ENCODE measurements at regions of chr12 and their contacts with region 1.

Region 1: DNA sequence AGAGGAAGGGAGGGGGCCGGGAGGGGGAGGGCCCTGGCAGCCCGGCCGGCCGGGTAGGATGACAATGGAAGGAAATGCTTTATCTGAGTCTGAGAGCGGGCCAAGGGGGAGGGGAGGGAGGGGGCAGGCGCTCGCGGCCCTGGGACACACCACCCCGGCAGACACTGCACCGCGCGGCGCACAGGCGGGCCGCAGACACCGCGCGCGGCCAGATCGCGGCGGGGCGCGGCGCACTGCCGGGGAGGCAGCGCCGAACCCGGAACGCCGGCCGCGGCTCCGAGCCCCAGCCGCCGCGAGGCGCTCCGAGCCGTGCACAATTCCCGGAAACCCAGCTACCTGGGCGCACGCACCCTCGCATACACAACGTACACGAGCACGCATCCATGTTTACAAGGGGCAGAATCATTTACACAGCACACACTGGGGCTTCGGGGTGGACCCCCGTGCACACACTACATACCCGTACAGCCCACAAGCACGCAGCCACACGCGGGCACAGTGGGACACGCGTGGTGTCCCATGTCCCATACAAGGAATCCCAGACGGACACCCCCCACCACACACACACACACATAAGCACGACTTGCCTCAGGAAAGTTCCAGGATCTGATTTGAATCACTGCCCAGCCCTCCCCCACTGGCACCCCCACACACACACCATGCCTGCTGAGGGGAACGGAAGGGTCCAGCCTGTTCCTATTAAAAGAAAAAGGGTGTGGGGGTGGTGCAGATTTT is at the start of gene HDAC7:
- DNase-seq: peak; percentile 57
- ATAC-seq: peak; percentile 76
- H3K4me3 Mint-ChIP-seq: peak within 1 kb of the TSS; percentile 89
- H3K27ac Mint-ChIP-seq: peak within 1 kb of the TSS; percentile 93
- H3K4me1 Mint-ChIP-seq: peaks cover 65% of the 10 kb centered on the region
- H3K27me3 Mint-ChIP-seq: no peaks in the 10 kb centered on the region
- CTCF ChIP-seq: no peak
- total RNA-seq, gene HDAC7: 103 and 126 TPM in 2 replicates

Region 2: GRCh38 chr12:47504775-47505446 is 315.2 kb before region 1 on chr12:
- CTCF ChIA-PET with region 1: no interaction called
- POLR2A ChIA-PET with region 1: no interaction called
- intact Hi-C with region 1: no loop called
- DNase-seq: no peak
- ATAC-seq: no peak
- H3K4me3 Mint-ChIP-seq: no peak overlapping the region
- H3K27ac Mint-ChIP-seq: no peak overlapping the region
- H3K4me1 Mint-ChIP-seq: no peaks in the 10 kb centered on the region
- H3K27me3 Mint-ChIP-seq: no peaks in the 10 kb centered on the region
- CTCF ChIP-seq: no peak

Region 3: DNA sequence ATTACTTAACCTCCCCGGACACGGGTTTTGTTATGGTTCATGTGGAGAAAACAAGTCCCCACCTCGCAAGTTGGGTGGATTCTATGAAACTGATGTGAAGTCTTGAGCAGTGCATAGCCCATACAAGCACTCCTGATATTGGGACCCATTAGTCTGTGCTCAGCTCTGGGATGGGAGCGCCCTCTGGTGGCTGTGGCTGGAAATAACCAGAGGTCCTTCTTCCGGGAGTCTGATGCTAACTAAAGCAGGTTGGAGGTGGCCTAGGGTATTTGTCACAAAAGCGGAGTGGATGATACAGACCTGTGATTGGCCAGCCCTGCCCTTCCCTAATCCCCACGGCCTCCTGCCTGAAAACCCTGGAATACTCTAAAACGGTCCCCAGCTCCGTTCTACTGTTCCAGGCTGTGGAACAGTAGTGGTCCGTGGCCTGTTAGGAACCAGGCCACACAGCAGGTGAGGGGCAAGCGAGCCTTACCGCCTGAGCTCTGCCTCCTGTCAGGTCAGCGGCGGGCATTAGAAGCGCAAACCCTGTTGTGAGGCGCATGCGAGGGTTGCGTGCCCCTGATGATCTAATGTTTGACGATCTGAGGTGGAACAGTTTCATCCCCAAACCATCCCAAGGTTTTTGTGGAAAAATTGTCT is 40.6 kb before region 1 on chr12:
- CTCF ChIA-PET with region 1: interaction called, 8 read pairs
- POLR2A ChIA-PET with region 1: interaction called, 3 read pairs
- intact Hi-C with region 1: loop called (anchors 1 kb)
- DNase-seq: peak; percentile 90
- ATAC-seq: peak; percentile 93
- H3K4me3 Mint-ChIP-seq: no peak overlapping the region
- H3K27ac Mint-ChIP-seq: peak overlapping the region; percentile 41
- H3K4me1 Mint-ChIP-seq: peaks cover 15% of the 10 kb centered on the region
- H3K27me3 Mint-ChIP-seq: no peaks in the 10 kb centered on the region
- CTCF ChIP-seq: no peak

Region 4: GRCh38 chr12:47797441-47797840 is 22.6 kb before region 1 on chr12:
- CTCF ChIA-PET with region 1: interaction called, 21 read pairs
- POLR2A ChIA-PET with region 1: interaction called, 7 read pairs
- intact Hi-C with region 1: loop called (anchors 1 kb)
- DNase-seq: peak; percentile 46
- ATAC-seq: peak; percentile 91
- H3K4me3 Mint-ChIP-seq: no peak overlapping the region
- H3K27ac Mint-ChIP-seq: peak overlapping the region; percentile 80
- H3K4me1 Mint-ChIP-seq: peaks cover 23% of the 10 kb centered on the region
- H3K27me3 Mint-ChIP-seq: no peaks in the 10 kb centered on the region
- CTCF ChIP-seq: no peak

Region 5: GRCh38 chr12:47980197-47980596 is 160.1 kb after region 1 on chr12:
- CTCF ChIA-PET with region 1: no interaction called
- POLR2A ChIA-PET with region 1: no interaction called
- intact Hi-C with region 1: no loop called
- DNase-seq: no peak
- ATAC-seq: no peak
- H3K4me3 Mint-ChIP-seq: no peak overlapping the region
- H3K27ac Mint-ChIP-seq: no peak overlapping the region
- H3K4me1 Mint-ChIP-seq: no peaks in the 10 kb centered on the region
- H3K27me3 Mint-ChIP-seq: peaks cover 2% of the 10 kb centered on the region
- CTCF ChIP-seq: no peak